ENCODE measurements at regions of chr12 and their contacts with region 1.

Region 1: GRCh38 chr12:76064904-76065303 is 19.6 kb downstream of the NAP1L1 start:
- DNase-seq: no peak
- H3K4me3 Mint-ChIP-seq: no peak overlapping the region
- H3K27ac Mint-ChIP-seq: no peak overlapping the region
- H3K4me1 Mint-ChIP-seq: peaks cover 35% of the 10 kb centered on the region
- H3K27me3 Mint-ChIP-seq: no peaks in the 10 kb centered on the region

Region 2: GRCh38 chr12:76078748-76079147 is 13.8 kb after region 1 on chr12:
- intact Hi-C with region 1: loop called (anchors 2 kb)
- DNase-seq: no peak
- H3K4me3 Mint-ChIP-seq: no peak overlapping the region
- H3K27ac Mint-ChIP-seq: no peak overlapping the region
- H3K4me1 Mint-ChIP-seq: peaks cover 55% of the 10 kb centered on the region
- H3K27me3 Mint-ChIP-seq: no peaks in the 10 kb centered on the region

Region 3: GRCh38 chr12:76106631-76107030 is 41.7 kb after region 1 on chr12:
- intact Hi-C with region 1: no loop called
- DNase-seq: no peak
- H3K4me3 Mint-ChIP-seq: no peak overlapping the region
- H3K27ac Mint-ChIP-seq: no peak overlapping the region
- H3K4me1 Mint-ChIP-seq: no peaks in the 10 kb centered on the region
- H3K27me3 Mint-ChIP-seq: peaks cover 26% of the 10 kb centered on the region

Region 4: DNA sequence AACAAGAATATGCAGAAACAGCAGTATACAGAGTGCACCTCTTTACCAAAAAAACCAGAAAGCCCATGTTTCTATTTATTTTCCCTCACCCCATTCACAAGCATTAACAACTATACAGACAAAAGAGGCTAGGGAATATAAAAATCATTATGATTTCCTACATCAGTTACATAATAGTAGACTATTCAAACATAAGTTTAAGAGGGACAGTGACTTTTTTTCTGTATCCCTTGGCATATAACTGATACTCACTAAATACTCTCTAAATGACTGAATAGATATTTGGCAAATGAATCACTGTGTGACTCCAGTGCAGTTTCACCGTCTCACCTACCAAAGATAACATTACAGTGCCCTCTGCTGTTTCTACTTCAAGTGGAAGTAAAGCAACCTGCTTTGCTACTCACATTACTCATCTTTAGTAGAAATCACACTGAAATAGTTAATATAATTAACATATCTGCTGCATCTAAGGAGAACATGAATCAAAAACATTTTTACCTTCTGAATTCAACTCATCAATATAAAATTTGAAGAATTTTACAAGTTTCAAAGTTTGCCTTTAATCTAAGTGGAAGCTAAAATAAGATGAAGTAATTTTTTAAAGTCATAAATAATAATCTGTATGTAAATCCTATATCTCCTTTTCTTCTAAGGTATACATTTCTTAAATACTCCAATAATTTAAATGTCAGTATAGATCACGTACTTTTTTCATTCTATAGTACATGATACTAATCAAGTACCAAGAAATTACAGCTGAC is 390.9 kb after region 1 on chr12:
- intact Hi-C with region 1: loop called (anchors 1 kb)
- DNase-seq: no peak
- H3K4me3 Mint-ChIP-seq: no peak overlapping the region
- H3K27ac Mint-ChIP-seq: no peak overlapping the region
- H3K4me1 Mint-ChIP-seq: peaks cover 8% of the 10 kb centered on the region
- H3K27me3 Mint-ChIP-seq: no peaks in the 10 kb centered on the region